SK-N-SH (cell line): ENCODE measurements at regions of chr2 and their contacts with region 1.

Region 1: GRCh38 chr2:172465417-172466334 is 38.3 kb downstream of the ITGA6 start:
- DNase-seq: peak; percentile 67
- H3K4me3 ChIP-seq: peak overlapping the region; percentile 36 to 41; a peak in 3 of 4 replicates
- H3K27ac ChIP-seq: peak overlapping the region in 1 of 2 experiments; percentile 42; a peak in 1 of 4 replicates
- H3K4me1 ChIP-seq: peaks cover 0 to 6% of the 10 kb centered on the region in 2 experiments; a peak in 3 of 4 replicates
- H3K27me3 ChIP-seq: no peaks in the 10 kb centered on the region
- CTCF ChIP-seq: peak; percentile 96
- EP300 ChIP-seq: no peak
- RAD21 ChIP-seq: peak; percentile 97

Region 2: DNA sequence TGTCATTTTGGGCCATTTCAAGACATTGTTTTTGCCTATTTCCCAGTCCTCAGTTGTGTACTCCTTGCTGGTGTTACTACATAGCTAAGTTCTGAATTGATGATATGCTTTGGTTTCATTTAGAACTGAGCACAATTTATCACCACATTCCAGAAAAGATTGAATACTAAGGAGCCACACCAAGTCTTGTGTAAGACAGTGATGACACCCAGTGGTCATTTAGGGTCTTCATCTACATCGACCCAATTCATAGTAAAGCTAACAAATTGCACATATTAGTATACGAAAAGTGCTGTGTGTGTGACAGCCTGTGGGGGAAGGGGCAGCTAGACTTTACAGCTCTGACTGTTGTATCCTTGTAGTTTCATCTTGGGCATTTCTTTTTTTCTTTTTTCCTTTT is 352.1 kb before region 1 on chr2:
- CTCF ChIA-PET with region 1: interaction called, 12 read pairs
- POLR2A ChIA-PET with region 1: no interaction called
- DNase-seq: peak; percentile 49
- H3K4me3 ChIP-seq: no peak overlapping the region
- H3K27ac ChIP-seq: no peak overlapping the region
- H3K4me1 ChIP-seq: peaks cover 0 to 1% of the 10 kb centered on the region in 2 experiments; a peak in 1 of 4 replicates
- H3K27me3 ChIP-seq: no peaks in the 10 kb centered on the region
- CTCF ChIP-seq: peak; percentile 58
- EP300 ChIP-seq: no peak
- RAD21 ChIP-seq: peak; percentile 69

Region 3: DNA sequence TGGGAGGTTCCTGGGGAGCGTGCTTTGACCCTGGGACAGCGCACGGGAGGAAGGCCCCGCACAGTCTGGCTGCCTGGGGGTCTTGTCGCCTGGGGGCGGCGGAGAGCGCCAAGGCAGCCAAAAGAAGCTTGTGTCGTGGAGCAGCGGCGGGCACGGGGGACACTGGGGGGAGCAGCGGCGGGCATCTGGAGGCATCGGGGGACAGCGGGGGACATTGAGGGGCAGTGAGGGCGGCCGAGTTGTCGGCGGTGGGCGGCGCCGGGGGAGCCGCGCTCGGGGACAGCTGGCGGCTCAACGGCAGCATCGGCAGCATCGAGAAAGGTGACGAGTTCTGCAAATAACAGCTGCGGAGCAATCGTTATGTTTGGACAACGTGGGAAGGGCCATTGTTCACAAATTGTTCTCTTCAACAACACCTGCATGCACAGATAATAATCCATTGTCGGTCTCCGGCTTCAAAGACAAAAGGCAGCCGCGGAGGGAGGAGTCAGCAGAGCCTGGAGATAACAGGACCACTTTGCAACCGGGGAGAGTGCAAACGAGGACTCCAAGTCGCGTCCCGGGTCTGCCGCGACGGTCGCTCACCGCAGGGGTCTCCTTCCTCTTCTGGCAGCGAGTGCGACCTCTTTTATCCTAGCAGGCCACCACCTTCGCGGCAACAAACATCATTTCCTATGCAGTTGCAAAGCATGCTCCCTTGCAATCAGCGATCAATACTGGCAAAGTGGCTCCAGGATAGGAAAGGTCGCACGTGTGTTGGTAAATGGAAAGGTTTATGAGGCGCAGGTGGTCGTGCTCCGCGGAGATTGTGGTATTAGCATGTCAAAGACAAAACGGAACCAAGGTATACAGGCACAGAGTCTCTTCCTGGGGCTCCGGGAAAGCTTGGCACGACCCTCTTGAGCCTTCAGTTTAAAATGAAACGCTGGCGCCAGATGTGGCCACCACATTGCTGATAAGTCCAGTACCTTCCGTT is 230.7 kb before region 1 on chr2:
- CTCF ChIA-PET with region 1: interaction called, 16 read pairs
- POLR2A ChIA-PET with region 1: no interaction called
- DNase-seq: peak; percentile 77
- H3K4me3 ChIP-seq: peak overlapping the region; percentile 42 to 55
- H3K27ac ChIP-seq: no peak overlapping the region
- H3K4me1 ChIP-seq: peaks cover 7 to 21% of the 10 kb centered on the region in 2 experiments
- H3K27me3 ChIP-seq: no peaks in the 10 kb centered on the region
- CTCF ChIP-seq: no peak; the same call in 1 of the 2 replicates
- EP300 ChIP-seq: no peak
- RAD21 ChIP-seq: no peak

Region 4: DNA sequence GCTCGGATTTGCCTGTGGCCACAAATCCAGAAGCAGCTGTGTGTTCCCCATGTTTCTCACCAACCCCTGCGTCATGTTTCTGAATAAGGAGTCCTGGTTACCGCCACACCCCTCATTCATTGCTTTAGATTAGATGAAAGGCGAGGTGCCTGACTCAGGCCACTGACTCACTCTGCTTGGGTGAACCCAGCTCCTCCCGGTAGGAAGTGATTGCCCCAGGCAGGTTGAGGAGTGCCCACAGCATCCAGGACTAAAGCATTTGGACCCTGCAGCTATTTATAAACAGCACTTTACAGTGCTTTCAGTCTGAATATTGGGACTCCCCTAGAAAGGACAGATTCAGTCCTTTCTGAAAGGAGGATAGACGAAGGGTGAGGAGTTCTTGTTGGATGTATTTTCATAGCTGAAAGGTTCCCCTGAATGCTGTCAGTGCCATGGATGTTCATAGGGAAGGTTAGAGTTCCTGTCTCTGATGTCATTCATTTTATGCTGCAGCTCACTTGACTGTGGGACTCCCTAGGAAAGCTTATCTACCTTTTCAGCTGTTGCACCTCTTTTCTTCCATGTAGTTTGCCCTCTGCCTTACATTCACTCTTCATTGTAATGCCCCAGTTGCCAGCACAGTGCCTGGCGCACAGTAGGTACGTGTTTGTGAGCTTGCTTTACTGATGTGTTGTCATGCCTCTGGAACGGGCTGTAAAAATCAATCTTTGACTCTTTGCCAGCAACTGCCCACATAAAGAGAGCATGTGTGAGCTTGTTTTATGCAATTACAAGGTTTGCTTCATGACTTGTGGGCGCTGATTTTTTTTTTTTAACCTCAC is 23.4 kb before region 1 on chr2:
- CTCF ChIA-PET with region 1: interaction called, 34 read pairs
- POLR2A ChIA-PET with region 1: no interaction called
- DNase-seq: no peak
- H3K4me3 ChIP-seq: 0 out of 4 replicates have a peak overlapping the region, but pooled peaks of 1 of the 2 experiments have one; percentile 10
- H3K27ac ChIP-seq: peak overlapping the region in 1 of 2 experiments; percentile 85; a peak in 2 of 4 replicates
- H3K4me1 ChIP-seq: peaks cover 3 to 56% of the 10 kb centered on the region in 2 experiments
- H3K27me3 ChIP-seq: no peaks in the 10 kb centered on the region
- CTCF ChIP-seq: no peak
- EP300 ChIP-seq: peak in 1 of 2 experiments; percentile 16; a peak in 1 of 4 replicates
- RAD21 ChIP-seq: no peak

Region 5: GRCh38 chr2:172484253-172484652 is 18.6 kb after region 1 on chr2:
- CTCF ChIA-PET with region 1: interaction called, 64 read pairs
- POLR2A ChIA-PET with region 1: no interaction called
- DNase-seq: peak; percentile 36
- H3K4me3 ChIP-seq: no peak overlapping the region
- H3K27ac ChIP-seq: no peak overlapping the region
- H3K4me1 ChIP-seq: peaks cover 0 to 6% of the 10 kb centered on the region in 2 experiments; a peak in 1 of 4 replicates
- H3K27me3 ChIP-seq: no peaks in the 10 kb centered on the region
- CTCF ChIP-seq: peak; percentile 55
- EP300 ChIP-seq: no peak
- RAD21 ChIP-seq: peak; percentile 72